ENCODE measurements at regions of chr14 and their contacts with region 1.

Region 1: DNA sequence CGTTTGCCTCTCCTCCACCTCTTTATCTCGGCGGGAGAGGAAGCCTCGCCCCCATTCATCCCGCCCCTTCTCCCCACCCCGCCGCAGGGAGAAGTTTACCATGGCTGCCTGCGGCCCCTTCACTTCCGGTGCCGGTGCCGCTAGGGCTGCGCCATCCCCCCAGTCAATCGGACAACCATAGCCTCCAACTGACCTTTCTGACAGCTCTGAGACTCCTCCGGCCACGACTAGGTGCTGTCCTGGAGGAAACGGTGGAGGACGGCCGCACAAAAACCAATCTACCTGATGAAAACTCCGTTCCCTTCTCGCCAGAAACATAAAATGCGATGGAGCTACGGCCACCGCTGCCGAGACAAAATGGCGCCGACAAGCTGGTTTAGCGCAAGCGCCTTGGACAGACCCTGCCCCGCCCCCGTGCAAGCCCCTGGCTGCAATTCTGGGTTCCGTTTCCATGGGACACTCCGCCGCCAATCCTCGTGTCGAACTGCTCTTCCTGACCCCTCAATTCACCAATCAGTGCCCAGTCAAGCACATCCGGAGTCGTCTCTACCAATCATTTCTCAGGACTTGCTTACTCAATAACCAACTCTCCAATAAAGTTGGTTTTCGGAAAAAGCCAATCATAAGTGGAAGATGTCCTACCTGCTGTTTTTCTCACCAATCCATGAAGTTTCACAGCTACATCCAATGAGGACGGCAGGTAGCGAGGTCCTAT is 436 bp upstream of the ARID4A start:
- DNase-seq: peak; percentile 98
- H3K4me3 Mint-ChIP-seq: no peak overlapping the region
- H3K27ac Mint-ChIP-seq: no peak overlapping the region
- H3K4me1 Mint-ChIP-seq: peaks cover 26% of the 10 kb centered on the region
- H3K27me3 Mint-ChIP-seq: no peaks in the 10 kb centered on the region

Region 2: DNA sequence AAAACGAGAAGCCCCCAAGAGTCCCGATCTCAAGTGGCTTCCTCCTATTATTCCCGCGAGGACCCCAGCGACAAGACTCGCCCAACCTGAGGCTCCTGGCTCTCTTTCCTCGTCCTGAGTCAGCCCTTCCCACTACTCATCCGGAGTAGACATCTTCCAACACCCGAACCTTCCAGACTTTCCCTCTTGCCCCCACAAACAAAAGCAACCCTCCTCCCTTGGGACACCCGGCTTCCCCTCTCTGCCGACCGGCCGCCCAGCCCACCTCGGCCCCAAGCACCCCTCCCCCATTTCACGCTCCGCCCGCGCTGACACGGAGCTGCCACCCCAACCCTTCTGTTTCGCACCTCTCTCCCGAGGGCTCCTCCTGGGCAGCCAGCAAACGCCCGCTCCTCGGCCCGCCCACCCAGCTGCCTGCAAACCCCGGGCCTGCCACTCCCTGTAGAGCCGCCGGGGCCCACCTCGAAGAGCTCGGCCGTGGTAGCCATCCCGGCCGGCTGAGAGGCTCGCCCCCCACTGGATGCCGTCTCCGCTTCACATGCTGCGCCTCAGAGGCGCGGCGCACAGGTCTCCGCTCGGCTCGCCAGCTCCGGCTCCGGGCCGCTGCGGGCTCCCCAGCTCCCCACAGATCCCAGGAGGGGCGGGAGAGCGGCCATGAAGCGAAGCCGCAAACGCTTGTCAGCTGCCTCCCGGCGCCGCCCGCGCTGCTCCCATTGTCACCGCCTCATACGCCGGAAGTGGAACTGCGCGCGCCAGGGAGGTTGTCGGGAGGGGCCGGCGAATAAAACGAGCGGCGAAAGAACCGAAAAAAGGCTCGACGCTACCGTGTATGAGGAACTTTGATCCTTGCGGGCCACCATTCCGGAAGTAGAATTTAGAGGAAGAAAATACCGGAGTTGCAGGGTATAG is 1029.5 kb before region 1 on chr14 and contains the starts of genes AP5M1 and EXOC5:
- intact Hi-C with region 1: loop called (anchors 5 kb)
- DNase-seq: peak; percentile 91
- H3K4me3 Mint-ChIP-seq: peak within 1 kb of the TSS; percentile 100
- H3K27ac Mint-ChIP-seq: peak within 1 kb of the TSS; percentile 100
- H3K4me1 Mint-ChIP-seq: peaks cover 51% of the 10 kb centered on the region
- H3K27me3 Mint-ChIP-seq: no peaks in the 10 kb centered on the region
- total RNA-seq, gene AP5M1: 43.9 and 49.7 TPM in 2 replicates
- total RNA-seq, gene EXOC5: 79.7 and 81.5 TPM in 2 replicates

Region 3: DNA sequence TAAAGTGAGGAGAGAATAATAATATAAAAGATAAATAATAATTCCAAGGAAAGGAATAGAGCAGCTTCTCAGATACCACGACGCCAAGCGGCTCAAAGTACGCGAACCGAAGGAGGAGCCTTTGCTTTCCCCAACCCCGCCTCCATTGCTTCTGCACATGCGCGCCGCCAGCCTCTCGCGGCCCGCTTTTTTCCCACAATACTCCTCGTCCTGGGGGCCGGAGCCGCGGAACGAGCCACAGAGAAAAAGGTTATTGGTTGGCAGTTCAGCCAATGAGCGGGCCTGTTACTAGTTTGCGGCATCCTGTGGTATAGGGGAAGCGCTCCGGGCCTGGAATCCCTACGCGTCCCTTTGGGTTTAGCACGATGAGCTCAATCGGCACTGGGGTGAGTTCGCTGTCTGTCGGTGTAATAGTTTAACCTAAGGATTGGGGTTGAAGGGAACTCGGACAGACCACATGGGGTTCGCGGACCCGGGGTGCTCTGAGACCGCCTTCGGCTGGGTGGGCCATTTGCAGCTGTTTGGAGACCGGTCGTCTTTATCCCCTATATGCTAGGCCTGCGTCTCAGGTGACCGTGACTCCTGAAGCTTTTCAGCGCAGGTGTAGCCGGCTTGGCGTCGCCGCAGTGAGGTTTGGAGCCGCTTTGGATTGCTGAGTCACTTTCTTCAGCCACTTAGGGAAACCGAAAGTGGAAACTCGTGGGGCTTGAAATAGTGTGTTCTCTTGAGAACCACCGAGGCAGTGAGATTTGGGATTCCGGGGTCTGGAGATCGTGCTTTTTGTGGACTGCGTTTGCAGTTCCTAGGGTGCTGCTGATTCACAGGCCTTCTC is 53.1 kb before region 1 on chr14 and contains the start of gene PSMA3:
- intact Hi-C with region 1: loop called (anchors 1 kb)
- DNase-seq: peak; percentile 98
- H3K4me3 Mint-ChIP-seq: peak within 1 kb of the TSS; percentile 94
- H3K27ac Mint-ChIP-seq: peak within 1 kb of the TSS; percentile 96
- H3K4me1 Mint-ChIP-seq: peaks cover 39% of the 10 kb centered on the region
- H3K27me3 Mint-ChIP-seq: no peaks in the 10 kb centered on the region
- total RNA-seq, gene PSMA3: 407 and 425 TPM in 2 replicates

Region 4: GRCh38 chr14:58280954-58281787 is 16.7 kb before region 1 on chr14:
- intact Hi-C with region 1: loop called (anchors 1 kb)
- DNase-seq: peak; percentile 12
- H3K4me3 Mint-ChIP-seq: peak overlapping the region; percentile 38
- H3K27ac Mint-ChIP-seq: peak overlapping the region; percentile 92
- H3K4me1 Mint-ChIP-seq: peaks cover 57% of the 10 kb centered on the region
- H3K27me3 Mint-ChIP-seq: no peaks in the 10 kb centered on the region

Region 5: GRCh38 chr14:58427281-58428117 is 129.6 kb after region 1 on chr14 and contains the starts of genes KIAA0586 and TIMM9:
- intact Hi-C with region 1: loop called (anchors 1 kb)
- DNase-seq: peak; percentile 97
- H3K4me3 Mint-ChIP-seq: peak within 1 kb of the TSS; percentile 94
- H3K27ac Mint-ChIP-seq: peak within 1 kb of the TSS; percentile 99
- H3K4me1 Mint-ChIP-seq: peaks cover 37% of the 10 kb centered on the region
- H3K27me3 Mint-ChIP-seq: no peaks in the 10 kb centered on the region
- total RNA-seq, gene KIAA0586: 23.5 and 24.4 TPM in 2 replicates
- total RNA-seq, gene TIMM9: 53.3 and 65.1 TPM in 2 replicates

Region 6: DNA sequence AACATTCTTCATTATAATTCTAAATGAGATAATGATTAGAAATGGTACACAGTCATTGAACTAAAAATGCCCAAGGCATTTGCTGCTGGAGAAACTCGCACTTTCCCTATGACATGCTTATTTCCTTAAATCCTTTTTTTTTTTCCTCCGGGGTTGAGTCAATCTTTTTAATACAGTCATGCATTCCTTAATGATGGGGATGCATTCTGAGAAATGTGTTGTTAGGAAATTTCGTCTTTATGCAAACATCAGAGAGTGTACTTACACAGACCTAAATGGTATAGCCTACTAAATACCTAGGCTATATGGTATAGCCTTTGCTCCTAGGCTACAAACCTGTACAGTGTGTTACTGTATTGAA is 310.0 kb after region 1 on chr14:
- intact Hi-C with region 1: no loop called
- DNase-seq: no peak
- H3K4me3 Mint-ChIP-seq: no peak overlapping the region
- H3K27ac Mint-ChIP-seq: no peak overlapping the region
- H3K4me1 Mint-ChIP-seq: no peaks in the 10 kb centered on the region
- H3K27me3 Mint-ChIP-seq: peaks cover 3% of the 10 kb centered on the region